ENCODE measurements at regions of chr16 and their contacts with region 1.

Region 1: GRCh38 chr16:70737377-70738082 is 51.7 kb upstream of the MTSS2 start:
- DNase-seq: peak; percentile 74 to 86 (median 86)
- ATAC-seq: peak; percentile 55 to 76 (median 74)
- H3K4me3 ChIP-seq: no peak overlapping the region
- H3K27ac ChIP-seq: peak overlapping the region; percentile 55 to 88 (median 84)
- H3K4me1 ChIP-seq: peaks cover 0 to 53% (median 21%) of the 10 kb centered on the region in 4 donors
- H3K27me3 ChIP-seq: no peaks in the 10 kb centered on the region
- CTCF ChIP-seq: no peak
- POLR2A ChIP-seq: peak; percentile 75

Region 2: DNA sequence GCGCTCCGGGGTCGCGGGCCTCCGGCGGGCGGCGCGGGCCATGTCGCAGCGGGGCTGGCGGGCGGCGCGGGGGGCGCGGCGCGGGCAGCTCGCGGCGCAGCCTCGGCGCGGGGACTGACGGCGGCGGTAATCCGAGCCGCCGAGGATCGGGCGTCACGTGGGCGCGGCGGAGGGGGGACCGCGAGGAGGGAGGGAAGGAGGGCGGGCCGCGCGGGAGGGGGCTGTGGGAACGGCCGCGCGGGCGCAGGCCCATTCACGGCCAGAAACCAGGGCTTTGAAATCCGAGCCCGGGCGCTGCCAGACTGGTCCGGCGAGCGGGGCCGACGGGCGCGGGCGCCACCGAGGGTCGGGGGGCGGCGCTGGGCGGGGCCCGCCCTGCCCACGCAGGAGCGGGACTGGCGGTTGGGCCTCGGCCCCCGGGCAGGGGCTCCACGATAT is 51.6 kb before region 1 on chr16 and contains the start of gene MTSS2:
- intact Hi-C with region 1: loop called (anchors 5 to 10 kb)
- DNase-seq: peak; percentile 85 to 90 (median 90)
- ATAC-seq: peak; percentile 56 to 69 (median 64)
- H3K4me3 ChIP-seq: peak within 1 kb of the TSS; percentile 68 to 83 (median 71)
- H3K27ac ChIP-seq: peak within 1 kb of the TSS; percentile 77 to 88 (median 83)
- H3K4me1 ChIP-seq: peaks cover 0 to 40% (median 13%) of the 10 kb centered on the region in 4 donors
- H3K27me3 ChIP-seq: no peaks in the 10 kb centered on the region
- CTCF ChIP-seq: no peak
- POLR2A ChIP-seq: peak; percentile 72
- total RNA-seq, gene MTSS2: 28.5 to 117 (median 80.2) TPM

Region 3: GRCh38 chr16:70700101-70701020 is 37.2 kb before region 1 on chr16:
- intact Hi-C with region 1: no loop called
- DNase-seq: peak in 2 of 3 donors; percentile 75
- ATAC-seq: peak; percentile 68 to 76 (median 70)
- H3K4me3 ChIP-seq: no peak overlapping the region
- H3K27ac ChIP-seq: no peak overlapping the region
- H3K4me1 ChIP-seq: peaks cover 0 to 25% (median 5%) of the 10 kb centered on the region in 4 donors
- H3K27me3 ChIP-seq: no peaks in the 10 kb centered on the region
- CTCF ChIP-seq: no peak
- POLR2A ChIP-seq: no peak